Mammary epithelial cell (primary cell): ENCODE measurements at regions of chr4 and their contacts with region 1.

Region 1: DNA sequence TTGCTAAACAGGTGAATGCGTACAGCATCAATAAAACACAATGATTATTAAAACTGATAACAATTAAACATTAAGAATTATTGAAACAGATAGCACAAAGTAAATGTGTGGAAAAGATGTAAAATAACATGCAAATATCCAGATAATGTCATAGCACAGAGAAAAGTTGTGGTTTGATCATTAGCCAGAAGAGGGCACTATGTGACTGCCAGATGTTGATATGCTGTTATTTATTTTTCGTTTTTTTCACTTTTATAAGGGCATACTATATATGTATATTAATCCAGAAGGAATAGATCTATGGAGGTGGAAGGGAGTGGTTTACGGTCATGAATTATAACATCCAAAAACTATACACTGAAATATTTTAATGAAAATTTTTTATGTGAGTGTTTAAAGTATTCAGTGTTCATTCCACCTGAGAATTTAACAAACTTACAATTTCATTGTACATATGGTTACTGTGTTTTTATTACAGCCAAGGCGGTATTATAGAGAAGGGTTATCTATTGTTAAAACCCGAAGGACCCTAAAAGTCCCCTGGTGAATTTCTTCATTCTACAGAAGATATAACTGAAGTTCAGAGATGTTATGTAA is 211.9 kb upstream of the UGT8 start:
- DNase-seq: no peak
- H3K4me3 ChIP-seq: no peak overlapping the region
- H3K27ac ChIP-seq: no peak overlapping the region
- H3K4me1 ChIP-seq: peaks cover 18% of the 10 kb centered on the region
- H3K27me3 ChIP-seq: no peaks in the 10 kb centered on the region
- CTCF ChIP-seq: peak; percentile 68 to 73

Region 2: GRCh38 chr4:113094802-113095201 is 1291.9 kb before region 1 on chr4:
- CTCF ChIA-PET with region 1: no interaction called
- dilution Hi-C with region 1: no loop called
- in situ Hi-C with region 1: no loop called
- intact Hi-C with region 1: loop called (anchors 5 kb)
- DNase-seq: no peak
- H3K4me3 ChIP-seq: no peak overlapping the region
- H3K27ac ChIP-seq: no peak overlapping the region
- H3K4me1 ChIP-seq: no peaks in the 10 kb centered on the region
- H3K27me3 ChIP-seq: peaks cover 4% of the 10 kb centered on the region
- CTCF ChIP-seq: peak; percentile 80

Region 3: GRCh38 chr4:113383111-113383785 is 1003.5 kb before region 1 on chr4:
- CTCF ChIA-PET with region 1: no interaction called
- dilution Hi-C with region 1: no loop called
- in situ Hi-C with region 1: loop called in 1 of 2 experiments (anchors 10 kb)
- intact Hi-C with region 1: no loop called
- DNase-seq: peak; percentile 17
- H3K4me3 ChIP-seq: no peak overlapping the region
- H3K27ac ChIP-seq: no peak overlapping the region
- H3K4me1 ChIP-seq: no peaks in the 10 kb centered on the region
- H3K27me3 ChIP-seq: no peaks in the 10 kb centered on the region
- CTCF ChIP-seq: no peak

Region 4: GRCh38 chr4:114077610-114078009 is 309.1 kb before region 1 on chr4:
- CTCF ChIA-PET with region 1: no interaction called
- dilution Hi-C with region 1: no loop called
- in situ Hi-C with region 1: loop called in 1 of 2 experiments (anchors 10 kb)
- intact Hi-C with region 1: no loop called
- DNase-seq: peak; percentile 73
- H3K4me3 ChIP-seq: no peak overlapping the region
- H3K27ac ChIP-seq: peak overlapping the region; percentile 19
- H3K4me1 ChIP-seq: peaks cover 13% of the 10 kb centered on the region
- H3K27me3 ChIP-seq: no peaks in the 10 kb centered on the region
- CTCF ChIP-seq: no peak

Region 5: GRCh38 chr4:114684462-114684861 is 297.7 kb after region 1 on chr4:
- CTCF ChIA-PET with region 1: no interaction called
- dilution Hi-C with region 1: no loop called
- in situ Hi-C with region 1: no loop called
- intact Hi-C with region 1: no loop called
- DNase-seq: no peak
- H3K4me3 ChIP-seq: no peak overlapping the region
- H3K27ac ChIP-seq: no peak overlapping the region
- H3K4me1 ChIP-seq: no peaks in the 10 kb centered on the region
- H3K27me3 ChIP-seq: no peaks in the 10 kb centered on the region
- CTCF ChIP-seq: no peak

Region 6: GRCh38 chr4:114694770-114695169 is 308.0 kb after region 1 on chr4:
- CTCF ChIA-PET with region 1: no interaction called
- dilution Hi-C with region 1: no loop called
- in situ Hi-C with region 1: loop called (anchors 10 kb)
- intact Hi-C with region 1: loop called (anchors 1 kb)
- DNase-seq: peak; percentile 16
- H3K4me3 ChIP-seq: no peak overlapping the region
- H3K27ac ChIP-seq: no peak overlapping the region
- H3K4me1 ChIP-seq: no peaks in the 10 kb centered on the region
- H3K27me3 ChIP-seq: no peaks in the 10 kb centered on the region
- CTCF ChIP-seq: peak; percentile 43 to 56